OCI-LY7 (cell line): ENCODE measurements at regions of chr12 and their contacts with region 1.

Region 1: DNA sequence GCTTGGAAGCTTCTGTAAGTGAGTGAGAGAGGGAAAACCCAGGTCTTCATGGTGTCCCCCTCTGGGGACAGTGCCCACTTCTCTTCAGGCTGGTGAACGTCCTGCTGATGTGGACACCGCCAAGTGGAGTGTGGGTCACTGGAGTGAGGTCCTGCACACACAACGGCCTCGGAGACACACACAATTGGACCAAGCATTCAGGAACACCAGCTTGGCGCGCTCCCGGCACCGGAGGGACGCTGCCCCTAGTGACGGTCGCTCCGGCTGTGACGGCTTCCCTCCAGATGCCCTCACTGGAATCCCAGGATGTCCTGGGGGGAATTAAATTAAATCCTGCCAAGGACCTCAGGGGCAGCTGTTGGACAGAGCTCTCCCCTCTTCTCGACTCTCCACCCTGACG is 123.1 kb downstream of the ZNF664 start:
- DNase-seq: no peak
- H3K4me3 ChIP-seq: no peak overlapping the region
- H3K27ac ChIP-seq: no peak overlapping the region
- H3K4me1 ChIP-seq: no peaks in the 10 kb centered on the region
- CTCF ChIP-seq: no peak

Region 2: DNA sequence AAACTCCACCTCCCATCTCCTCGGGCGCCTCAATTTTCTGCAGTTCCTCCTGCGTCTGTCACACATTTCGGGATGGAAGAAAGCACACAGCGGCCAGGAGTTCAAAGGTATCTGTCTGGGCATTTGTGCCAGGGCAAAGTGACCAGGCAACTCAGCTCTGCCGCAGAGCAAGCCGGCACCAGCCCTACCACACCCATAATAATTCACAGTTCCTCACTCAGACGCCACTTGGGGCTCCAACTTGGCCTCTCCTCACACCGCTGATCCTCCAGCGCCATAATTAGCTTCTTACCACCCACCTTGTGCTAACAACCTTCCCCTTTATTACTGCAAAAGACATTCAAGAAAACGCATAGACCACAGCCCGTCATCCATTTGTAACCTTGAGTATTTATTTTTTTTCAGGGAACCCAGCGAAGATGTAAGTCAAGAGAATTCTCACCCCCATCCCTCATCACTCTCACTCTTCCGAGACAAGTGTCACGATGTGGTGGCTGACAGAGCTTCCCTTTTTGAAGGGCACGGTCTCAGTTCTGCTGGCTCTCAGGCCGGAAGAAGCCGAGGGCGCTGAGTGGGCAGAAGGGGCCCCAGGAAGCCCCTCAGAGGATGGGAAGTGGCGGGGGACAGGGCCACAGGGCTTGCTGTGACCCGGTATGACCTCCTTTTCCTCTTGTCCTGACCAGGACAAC is 496.5 kb after region 1 on chr12:
- CTCF ChIA-PET with region 1: interaction called, 11 read pairs
- POLR2A ChIA-PET with region 1: no interaction called
- intact Hi-C with region 1: no loop called
- DNase-seq: no peak
- H3K4me3 ChIP-seq: no peak overlapping the region
- H3K27ac ChIP-seq: no peak overlapping the region
- H3K4me1 ChIP-seq: no peaks in the 10 kb centered on the region
- CTCF ChIP-seq: no peak